Activated B cell treated with CpG ODN at 0.5 μM for 24 hours (primary cell): ENCODE measurements at regions of chr2 and their contacts with region 1.

Region 1: GRCh38 chr2:237966565-237967462 is at the start of gene UBE2F:
- DNase-seq: peak; percentile 97
- ATAC-seq: peak; percentile 95
- H3K4me3 Mint-ChIP-seq: peak within 1 kb of the TSS; percentile 84
- H3K27ac Mint-ChIP-seq: peak within 1 kb of the TSS; percentile 82
- H3K4me1 Mint-ChIP-seq: peaks cover 34% of the 10 kb centered on the region
- H3K27me3 Mint-ChIP-seq: no peaks in the 10 kb centered on the region
- CTCF ChIP-seq: no peak
- total RNA-seq, gene UBE2F: 32.4 and 41.2 TPM in 2 replicates

Region 2: GRCh38 chr2:237858294-237859081 is 108.3 kb before region 1 on chr2:
- CTCF ChIA-PET with region 1: no interaction called
- POLR2A ChIA-PET with region 1: no interaction called
- intact Hi-C with region 1: loop called (anchors 1 kb)
- DNase-seq: no peak
- ATAC-seq: peak; percentile 73
- H3K4me3 Mint-ChIP-seq: peak overlapping the region; percentile 47
- H3K27ac Mint-ChIP-seq: no peak overlapping the region
- H3K4me1 Mint-ChIP-seq: peaks cover 7% of the 10 kb centered on the region
- H3K27me3 Mint-ChIP-seq: peaks cover 45% of the 10 kb centered on the region
- CTCF ChIP-seq: no peak

Region 3: GRCh38 chr2:237998530-237998929 is 31.7 kb after region 1 on chr2:
- CTCF ChIA-PET with region 1: interaction called, 4 read pairs
- POLR2A ChIA-PET with region 1: no interaction called
- intact Hi-C with region 1: loop called (anchors 1 kb)
- DNase-seq: no peak
- ATAC-seq: peak; percentile 62
- H3K4me3 Mint-ChIP-seq: peak overlapping the region; percentile 48
- H3K27ac Mint-ChIP-seq: peak overlapping the region; percentile 56
- H3K4me1 Mint-ChIP-seq: peaks cover 17% of the 10 kb centered on the region
- H3K27me3 Mint-ChIP-seq: no peaks in the 10 kb centered on the region
- CTCF ChIP-seq: no peak

Region 4: DNA sequence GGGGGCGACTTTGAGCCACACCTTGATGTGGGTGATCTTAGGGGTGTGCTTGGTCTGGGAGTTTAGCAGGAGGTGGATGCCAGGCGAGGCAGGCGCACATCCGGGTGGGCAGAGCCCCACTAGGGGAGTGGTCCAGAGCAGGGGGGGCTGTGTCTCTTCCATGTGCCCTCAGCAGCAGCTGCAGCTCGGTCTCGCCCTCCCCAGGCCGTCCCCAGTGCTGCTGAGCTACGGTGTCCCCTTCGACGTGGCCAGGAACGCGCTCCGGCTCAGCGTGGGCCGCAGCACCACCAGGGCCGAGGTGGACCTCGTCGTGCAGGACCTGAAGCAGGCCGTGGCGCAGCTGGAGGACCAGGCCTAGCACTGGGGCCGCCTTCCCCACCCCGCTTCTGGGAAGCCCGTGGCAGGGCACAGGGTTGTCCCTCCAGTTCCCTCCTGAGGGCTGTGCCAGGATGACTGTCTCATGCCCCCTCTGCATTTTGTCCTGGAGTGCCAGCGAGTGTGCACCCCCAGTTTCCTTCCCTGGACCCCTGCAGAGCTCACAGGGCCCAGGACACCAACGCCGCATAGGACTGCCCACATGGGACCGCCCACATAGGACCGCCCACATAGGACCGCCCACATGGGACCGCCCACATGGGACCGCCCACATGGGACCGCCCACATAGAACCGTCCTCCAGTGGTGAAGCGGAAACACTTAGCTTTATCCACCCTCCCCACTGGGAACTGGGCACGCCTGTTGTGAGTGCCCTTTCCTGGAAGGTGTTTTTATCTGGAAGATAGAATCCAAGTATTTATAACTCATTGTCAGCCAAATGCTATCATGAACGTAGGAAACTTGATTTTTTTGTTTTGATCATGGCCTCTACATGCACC is 131.4 kb after region 1 on chr2:
- CTCF ChIA-PET with region 1: no interaction called
- POLR2A ChIA-PET with region 1: no interaction called
- intact Hi-C with region 1: loop called (anchors 2 kb)
- DNase-seq: no peak
- ATAC-seq: peak; percentile 98
- H3K4me3 Mint-ChIP-seq: peak overlapping the region; percentile 72
- H3K27ac Mint-ChIP-seq: peak overlapping the region; percentile 76
- H3K4me1 Mint-ChIP-seq: peaks cover 19% of the 10 kb centered on the region
- H3K27me3 Mint-ChIP-seq: no peaks in the 10 kb centered on the region
- CTCF ChIP-seq: no peak

Region 5: GRCh38 chr2:238203094-238203972 is 236.5 kb after region 1 on chr2 and contains the start of gene ILKAP:
- CTCF ChIA-PET with region 1: no interaction called
- POLR2A ChIA-PET with region 1: no interaction called
- intact Hi-C with region 1: loop called (anchors 1 kb)
- DNase-seq: peak; percentile 90
- ATAC-seq: peak; percentile 97
- H3K4me3 Mint-ChIP-seq: peak within 1 kb of the TSS; percentile 85
- H3K27ac Mint-ChIP-seq: peak within 1 kb of the TSS; percentile 89
- H3K4me1 Mint-ChIP-seq: peaks cover 48% of the 10 kb centered on the region
- H3K27me3 Mint-ChIP-seq: no peaks in the 10 kb centered on the region
- CTCF ChIP-seq: no peak
- total RNA-seq, gene ILKAP: 64.4 and 77.3 TPM in 2 replicates

Region 6: GRCh38 chr2:238263204-238264071 is 296.6 kb after region 1 on chr2:
- CTCF ChIA-PET with region 1: interaction called, 5 read pairs
- POLR2A ChIA-PET with region 1: no interaction called
- intact Hi-C with region 1: loop called (anchors 2 kb)
- DNase-seq: peak; percentile 53
- ATAC-seq: peak; percentile 57
- H3K4me3 Mint-ChIP-seq: no peak overlapping the region
- H3K27ac Mint-ChIP-seq: no peak overlapping the region
- H3K4me1 Mint-ChIP-seq: peaks cover 3% of the 10 kb centered on the region
- H3K27me3 Mint-ChIP-seq: no peaks in the 10 kb centered on the region
- CTCF ChIP-seq: peak; percentile 54

Region 7: GRCh38 chr2:238426568-238427434 is 460.0 kb after region 1 on chr2 and contains the start of gene ASB1:
- CTCF ChIA-PET with region 1: no interaction called
- POLR2A ChIA-PET with region 1: no interaction called
- intact Hi-C with region 1: loop called (anchors 10 kb)
- DNase-seq: peak; percentile 84
- ATAC-seq: peak; percentile 86
- H3K4me3 Mint-ChIP-seq: peak within 1 kb of the TSS; percentile 92
- H3K27ac Mint-ChIP-seq: peak within 1 kb of the TSS; percentile 94
- H3K4me1 Mint-ChIP-seq: peaks cover 39% of the 10 kb centered on the region
- H3K27me3 Mint-ChIP-seq: no peaks in the 10 kb centered on the region
- CTCF ChIP-seq: no peak
- total RNA-seq, gene ASB1: 44.5 and 49.8 TPM in 2 replicates